H1 (cell line): ENCODE measurements at regions of chr4 and their contacts with region 1.

Region 1: GRCh38 chr4:4488405-4489404 is 53.1 kb downstream of the STX18 start:
- DNase-seq: peak; percentile 15 to 74
- H3K4me3 ChIP-seq: no peak overlapping the region
- H3K27ac ChIP-seq: no peak overlapping the region
- H3K4me1 ChIP-seq: peaks cover 0 to 4% (median 2%) of the 10 kb centered on the region in 4 experiments; a peak in 4 of 7 replicates
- H3K27me3 ChIP-seq: peaks cover 0 to 1% (median 0%) of the 10 kb centered on the region in 4 experiments; a peak in 1 of 7 replicates
- CTCF ChIP-seq: peak; percentile 53 to 94 (median 74)
- EP300 ChIP-seq: no peak
- POLR2A ChIP-seq: no peak
- RAD21 ChIP-seq: peak; percentile 87 to 88

Region 2: GRCh38 chr4:4880492-4880891 is 391.8 kb after region 1 on chr4:
- CTCF ChIA-PET with region 1: interaction called, 13 read pairs
- POLR2A ChIA-PET with region 1: no interaction called
- DNase-seq: no peak
- H3K4me3 ChIP-seq: no peak overlapping the region
- H3K27ac ChIP-seq: no peak overlapping the region
- H3K4me1 ChIP-seq: no peaks in the 10 kb centered on the region
- H3K27me3 ChIP-seq: peaks cover 3 to 26% (median 14%) of the 10 kb centered on the region in 4 experiments
- CTCF ChIP-seq: peak in 2 of 3 experiments; percentile 19 to 27; a peak in 2 of 4 replicates
- EP300 ChIP-seq: no peak
- POLR2A ChIP-seq: no peak
- RAD21 ChIP-seq: peak; percentile 39 to 40; a peak in 3 of 4 replicates